H1 (cell line): ENCODE measurements at regions of chr10 and their contacts with region 1.

Region 1: GRCh38 chr10:122688293-122688994 is 11.2 kb downstream of the C10orf120 start:
- DNase-seq: no peak
- H3K4me3 ChIP-seq: no peak overlapping the region
- H3K27ac ChIP-seq: no peak overlapping the region
- H3K4me1 ChIP-seq: 0 out of 7 replicates have a peak, but pooled peaks cover 0 to 2% (median 0%) of the 10 kb centered on the region in 4 experiments
- H3K27me3 ChIP-seq: no peaks in the 10 kb centered on the region
- CTCF ChIP-seq: peak in 2 of 3 experiments; percentile 2 to 31; a peak in 2 of 4 replicates
- EP300 ChIP-seq: no peak
- POLR2A ChIP-seq: no peak
- RAD21 ChIP-seq: peak; percentile 34 to 42; a peak in 3 of 4 replicates

Region 2: DNA sequence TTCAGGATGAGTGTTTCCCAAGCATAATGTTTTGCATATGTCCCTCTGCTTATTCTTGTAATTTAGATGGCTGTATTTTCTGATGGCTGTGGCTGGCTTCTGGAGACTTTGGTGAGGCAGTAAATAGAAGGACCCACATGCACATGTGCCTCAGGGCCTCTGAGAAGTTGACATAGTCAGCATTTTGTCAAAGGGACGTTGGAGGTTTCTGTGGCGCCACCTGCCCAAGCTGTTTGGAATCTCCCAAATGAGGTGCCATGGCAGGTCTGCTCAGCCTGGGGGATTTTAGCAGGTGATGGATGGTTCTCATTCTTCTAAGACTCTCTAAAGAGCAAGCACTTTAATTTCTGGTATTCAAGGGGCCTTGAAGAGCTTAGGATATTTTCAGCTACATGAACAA is 18.6 kb before region 1 on chr10:
- CTCF ChIA-PET with region 1: interaction called, 11 read pairs
- POLR2A ChIA-PET with region 1: no interaction called
- DNase-seq: no peak
- H3K4me3 ChIP-seq: no peak overlapping the region
- H3K27ac ChIP-seq: no peak overlapping the region
- H3K4me1 ChIP-seq: 0 out of 7 replicates have a peak, but pooled peaks cover 0 to 2% (median 0%) of the 10 kb centered on the region in 4 experiments
- H3K27me3 ChIP-seq: no peaks in the 10 kb centered on the region
- CTCF ChIP-seq: peak; percentile 31 to 54 (median 46); a peak in 3 of 4 replicates
- EP300 ChIP-seq: no peak
- POLR2A ChIP-seq: no peak
- RAD21 ChIP-seq: peak in 1 of 2 experiments; percentile 42; a peak in 2 of 4 replicates

Region 3: DNA sequence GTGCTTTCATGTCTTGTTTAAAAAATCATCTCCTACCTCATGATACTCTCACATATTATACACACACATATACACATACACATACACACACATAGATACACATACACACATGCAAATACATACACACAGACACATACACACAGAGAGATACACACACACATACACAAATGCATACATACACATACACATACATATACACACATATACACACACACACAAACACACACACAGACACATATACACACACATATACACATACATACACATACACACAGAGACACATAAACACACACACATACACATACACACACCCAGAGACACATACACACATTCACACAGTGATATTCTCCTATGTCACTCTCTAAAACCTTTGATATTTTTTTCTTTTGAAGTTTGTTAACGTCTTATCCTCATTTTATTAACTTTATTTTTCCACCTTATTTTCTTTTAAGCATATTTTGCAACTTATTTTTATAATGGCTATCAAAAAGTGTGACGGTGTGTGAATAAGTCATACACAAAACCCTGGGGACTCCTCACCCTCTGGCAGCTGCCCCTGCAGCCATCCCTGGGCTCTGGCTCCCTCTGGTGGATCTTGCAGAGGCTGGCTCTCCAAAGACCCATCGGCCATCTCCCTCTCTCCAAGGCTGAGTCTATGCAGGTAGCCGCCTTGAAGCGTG is 15.1 kb after region 1 on chr10:
- CTCF ChIA-PET with region 1: interaction called, 12 read pairs
- POLR2A ChIA-PET with region 1: no interaction called
- DNase-seq: peak; percentile 46 to 86
- H3K4me3 ChIP-seq: no peak overlapping the region
- H3K27ac ChIP-seq: no peak overlapping the region
- H3K4me1 ChIP-seq: no peaks in the 10 kb centered on the region; a peak in 1 of 7 replicates
- H3K27me3 ChIP-seq: no peaks in the 10 kb centered on the region
- CTCF ChIP-seq: peak; percentile 92 to 97 (median 95)
- EP300 ChIP-seq: no peak
- POLR2A ChIP-seq: no peak
- RAD21 ChIP-seq: peak; percentile 99